ENCODE measurements at regions of chr4 and their contacts with region 1.

Region 1: DNA sequence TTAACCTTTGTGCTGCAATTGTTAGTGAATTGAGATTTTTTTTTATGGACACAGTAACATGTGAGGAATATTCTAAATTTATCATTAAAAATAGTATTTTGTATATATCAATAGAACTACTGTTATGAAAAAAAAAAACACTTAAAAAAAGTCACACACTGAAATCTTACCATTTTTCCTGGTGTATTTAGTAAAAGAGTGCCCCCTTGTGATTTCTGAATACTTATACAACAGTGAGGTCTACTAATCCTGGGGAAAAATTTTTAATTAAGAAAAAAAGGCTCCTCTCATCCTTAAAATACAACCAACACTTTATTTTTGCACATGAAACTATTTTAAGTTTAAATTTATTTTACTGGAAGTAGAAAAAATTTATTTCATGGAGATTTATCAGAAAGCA is 56.4 kb upstream of the SPOCK3 start:
- DNase-seq: no peak
- H3K4me3 ChIP-seq: no peak overlapping the region
- H3K27ac ChIP-seq: no peak overlapping the region
- H3K4me1 ChIP-seq: no peaks in the 10 kb centered on the region
- H3K27me3 ChIP-seq: no peaks in the 10 kb centered on the region
- CTCF ChIP-seq: peak; percentile 53

Region 2: GRCh38 chr4:167021545-167022155 is 269.0 kb before region 1 on chr4:
- intact Hi-C with region 1: loop called (anchors 5 kb)
- DNase-seq: peak; percentile 45
- H3K4me3 ChIP-seq: no peak overlapping the region
- H3K27ac ChIP-seq: no peak overlapping the region
- H3K4me1 ChIP-seq: no peaks in the 10 kb centered on the region
- H3K27me3 ChIP-seq: no peaks in the 10 kb centered on the region
- CTCF ChIP-seq: peak; percentile 81

Region 3: DNA sequence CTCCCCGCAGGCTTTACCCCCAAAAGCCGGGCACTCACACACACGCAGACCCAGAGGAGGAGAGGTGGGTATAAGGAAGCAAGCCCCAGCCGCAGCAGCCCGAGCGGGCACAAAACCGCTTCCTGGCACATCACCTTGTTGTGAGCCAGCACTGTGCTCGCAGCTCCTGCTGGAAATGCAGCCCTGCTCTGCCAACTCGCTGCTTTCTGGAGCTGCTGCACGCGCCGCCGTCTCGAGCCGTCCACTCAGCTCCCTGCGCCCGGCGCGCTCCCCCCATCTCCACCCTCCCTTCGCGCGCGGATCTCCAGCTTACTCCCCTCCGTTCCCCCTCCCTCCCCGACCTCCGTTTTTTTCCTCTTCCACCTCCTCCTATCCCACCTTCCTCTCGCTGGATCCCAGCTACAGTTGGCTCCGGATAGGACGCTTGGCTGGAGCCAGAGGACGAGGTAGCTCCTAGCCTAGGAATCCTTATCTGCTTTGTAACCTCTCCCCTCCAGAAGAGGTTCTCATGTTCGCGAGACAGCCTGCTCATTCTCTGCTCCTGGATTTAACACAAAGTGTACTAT is 56.3 kb before region 1 on chr4 and contains the start of gene SPOCK3:
- intact Hi-C with region 1: no loop called
- DNase-seq: peak; percentile 23
- H3K4me3 ChIP-seq: peak within 1 kb of the TSS; percentile 65
- H3K27ac ChIP-seq: no peak within 1 kb of the TSS
- H3K4me1 ChIP-seq: peaks cover 14% of the 10 kb centered on the region
- H3K27me3 ChIP-seq: peaks cover 57% of the 10 kb centered on the region
- CTCF ChIP-seq: no peak
- total RNA-seq, gene SPOCK3: 0.22 TPM

Region 4: DNA sequence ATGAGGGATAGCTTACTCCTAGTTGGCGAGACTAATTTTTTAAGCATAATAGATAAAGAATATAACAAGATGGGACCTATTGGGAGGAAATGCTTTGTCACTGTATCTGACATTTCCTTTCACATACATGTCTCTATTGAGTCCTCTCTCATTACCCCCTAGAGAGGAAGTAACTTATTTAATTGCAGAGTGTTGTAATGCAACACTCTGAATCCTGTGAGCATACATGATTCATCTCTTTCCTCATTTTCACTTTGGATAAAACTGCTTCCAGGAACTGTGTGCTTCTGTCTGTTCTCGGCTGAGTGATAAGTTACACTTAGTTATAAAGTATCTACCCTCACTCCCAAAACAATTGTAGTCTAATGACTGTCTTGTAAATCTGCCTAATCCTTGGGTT is 535.6 kb after region 1 on chr4:
- intact Hi-C with region 1: no loop called
- DNase-seq: no peak
- H3K4me3 ChIP-seq: no peak overlapping the region
- H3K27ac ChIP-seq: no peak overlapping the region
- H3K4me1 ChIP-seq: no peaks in the 10 kb centered on the region
- H3K27me3 ChIP-seq: no peaks in the 10 kb centered on the region
- CTCF ChIP-seq: no peak

Measured in left ventricle myocardium inferior (tissue), 1 donor.